PC-3 (cell line): ENCODE measurements at regions of chr6 and their contacts with region 1.

Region 1: GRCh38 chr6:46186583-46186982 is 15.8 kb upstream of the ENPP5 start:
- DNase-seq: peak; percentile 82
- ATAC-seq: peak; percentile 83
- H3K4me3 ChIP-seq: no peak overlapping the region
- H3K27ac ChIP-seq: no peak overlapping the region
- H3K4me1 ChIP-seq: peaks cover 33% of the 10 kb centered on the region
- H3K27me3 ChIP-seq: peaks cover 51% of the 10 kb centered on the region
- CTCF ChIP-seq: no peak

Region 2: GRCh38 chr6:46078294-46078693 is 108.3 kb before region 1 on chr6:
- CTCF ChIA-PET with region 1: no interaction called
- POLR2A ChIA-PET with region 1: no interaction called
- intact Hi-C with region 1: no loop called
- DNase-seq: no peak
- ATAC-seq: no peak
- H3K4me3 ChIP-seq: no peak overlapping the region
- H3K27ac ChIP-seq: no peak overlapping the region
- H3K4me1 ChIP-seq: no peaks in the 10 kb centered on the region
- H3K27me3 ChIP-seq: peaks cover 79% of the 10 kb centered on the region
- CTCF ChIP-seq: no peak

Region 3: GRCh38 chr6:46129629-46130511 is 56.7 kb before region 1 on chr6 and contains the start of gene ENPP4:
- CTCF ChIA-PET with region 1: no interaction called
- POLR2A ChIA-PET with region 1: no interaction called
- intact Hi-C with region 1: loop called (anchors 2 kb)
- DNase-seq: peak; percentile 98
- ATAC-seq: peak; percentile 100
- H3K4me3 ChIP-seq: peak within 1 kb of the TSS; percentile 95
- H3K27ac ChIP-seq: no peak within 1 kb of the TSS
- H3K4me1 ChIP-seq: peaks cover 6% of the 10 kb centered on the region; the same call in 1 of the 2 replicates
- H3K27me3 ChIP-seq: no peaks in the 10 kb centered on the region
- CTCF ChIP-seq: no peak
- total RNA-seq, gene ENPP4: 2.8 and 5.1 TPM in 2 replicates